ENCODE measurements at regions of chr18 and their contacts with region 1.

Region 1: GRCh38 chr18:47100214-47100831 is 50.0 kb downstream of the HDHD2 start:
- DNase-seq: peak; percentile 67
- ATAC-seq: peak; percentile 63
- H3K4me3 Mint-ChIP-seq: no peak overlapping the region
- H3K27ac Mint-ChIP-seq: no peak overlapping the region
- H3K4me1 Mint-ChIP-seq: no peaks in the 10 kb centered on the region
- H3K27me3 Mint-ChIP-seq: no peaks in the 10 kb centered on the region

Region 2: DNA sequence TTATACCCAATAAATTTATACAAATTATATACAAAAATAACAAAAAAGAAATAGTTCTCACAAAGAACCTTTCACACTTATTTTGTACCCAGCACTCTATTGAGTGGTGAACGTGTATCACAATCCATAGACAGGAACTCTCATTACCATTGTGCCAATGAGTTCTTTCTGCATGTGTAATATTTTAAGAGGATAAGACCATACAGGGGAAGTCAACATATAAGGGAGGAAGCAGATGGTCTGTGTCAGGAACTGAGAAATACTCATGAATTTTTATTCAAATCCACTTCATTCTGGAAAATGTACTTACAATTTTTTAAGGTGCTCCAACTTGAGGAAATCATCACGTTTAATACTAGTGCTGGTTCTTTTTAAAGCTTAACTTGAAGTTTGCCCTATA is 37.9 kb before region 1 on chr18:
- CTCF ChIA-PET with region 1: no interaction called
- DNase-seq: no peak
- ATAC-seq: no peak
- H3K4me3 Mint-ChIP-seq: no peak overlapping the region
- H3K27ac Mint-ChIP-seq: no peak overlapping the region
- H3K4me1 Mint-ChIP-seq: no peaks in the 10 kb centered on the region
- H3K27me3 Mint-ChIP-seq: peaks cover 2% of the 10 kb centered on the region

Region 3: GRCh38 chr18:47204908-47205522 is 104.7 kb after region 1 on chr18:
- CTCF ChIA-PET with region 1: interaction called, 19 read pairs
- DNase-seq: peak; percentile 46
- ATAC-seq: no peak
- H3K4me3 Mint-ChIP-seq: no peak overlapping the region
- H3K27ac Mint-ChIP-seq: no peak overlapping the region
- H3K4me1 Mint-ChIP-seq: no peaks in the 10 kb centered on the region
- H3K27me3 Mint-ChIP-seq: peaks cover 50% of the 10 kb centered on the region

Measured in activated CD8-positive, alpha-beta memory T cell treated with anti-CD3 and anti-CD28 coated beads, Interleukin-2, amount 10 ng/mL, durations not matched to agents 7 days and 5 days (primary cell).